SK-N-SH (cell line): ENCODE measurements at regions of chr20 and their contacts with region 1.

Region 1: GRCh38 chr20:37192137-37192854 is 12.9 kb upstream of the MROH8 start:
- DNase-seq: peak; percentile 78
- H3K4me3 ChIP-seq: no peak overlapping the region
- H3K27ac ChIP-seq: no peak overlapping the region
- H3K4me1 ChIP-seq: peaks cover 4 to 5% of the 10 kb centered on the region in 2 experiments; a peak in 2 of 4 replicates
- H3K27me3 ChIP-seq: no peaks in the 10 kb centered on the region
- CTCF ChIP-seq: peak; percentile 85
- EP300 ChIP-seq: no peak
- RAD21 ChIP-seq: peak; percentile 71

Region 2: GRCh38 chr20:36908603-36909002 is 283.7 kb before region 1 on chr20:
- CTCF ChIA-PET with region 1: no interaction called
- POLR2A ChIA-PET with region 1: no interaction called
- DNase-seq: peak; percentile 47
- H3K4me3 ChIP-seq: no peak overlapping the region
- H3K27ac ChIP-seq: no peak overlapping the region
- H3K4me1 ChIP-seq: peaks cover 0 to 2% of the 10 kb centered on the region in 2 experiments; a peak in 1 of 4 replicates
- H3K27me3 ChIP-seq: no peaks in the 10 kb centered on the region
- CTCF ChIP-seq: no peak
- EP300 ChIP-seq: no peak
- RAD21 ChIP-seq: no peak

Region 3: DNA sequence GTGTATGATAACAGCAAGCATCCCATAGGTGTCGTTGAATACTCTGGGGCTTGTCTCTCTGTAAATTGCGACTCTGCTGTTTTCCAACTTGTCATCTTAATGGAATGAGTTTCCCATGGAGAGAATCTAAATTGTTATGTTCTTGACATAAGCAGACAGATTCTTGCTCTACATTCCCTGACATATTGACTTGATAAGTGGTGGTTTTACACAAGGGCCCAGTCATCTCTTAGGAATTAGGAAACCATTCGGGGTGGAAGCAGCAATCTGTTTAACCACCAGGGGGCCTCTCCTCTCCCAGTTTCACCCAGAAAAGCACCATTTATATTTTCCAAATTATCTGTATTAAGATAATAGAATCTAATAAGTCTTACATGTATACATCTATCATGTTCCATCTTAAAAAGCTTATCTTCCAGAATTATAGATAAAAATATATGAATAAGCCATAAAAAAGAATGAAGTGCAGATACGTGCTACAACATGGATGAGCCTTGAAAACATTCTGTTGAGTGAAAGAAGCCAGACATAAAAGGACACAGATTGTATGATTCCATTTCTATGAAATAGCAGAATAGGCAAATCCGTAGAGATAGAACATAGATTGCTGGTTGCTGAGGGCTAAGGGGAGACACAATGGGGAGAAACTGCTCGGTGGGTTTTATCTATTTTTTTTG is 10.1 kb after region 1 on chr20:
- CTCF ChIA-PET with region 1: interaction called, 35 read pairs
- POLR2A ChIA-PET with region 1: no interaction called
- DNase-seq: peak; percentile 66
- H3K4me3 ChIP-seq: peak overlapping the region in 1 of 2 experiments; percentile 23; a peak in 2 of 4 replicates
- H3K27ac ChIP-seq: peak overlapping the region; percentile 93 to 96
- H3K4me1 ChIP-seq: peaks cover 13 to 28% of the 10 kb centered on the region in 2 experiments
- H3K27me3 ChIP-seq: no peaks in the 10 kb centered on the region
- CTCF ChIP-seq: peak; percentile 95
- EP300 ChIP-seq: peak; percentile 19 to 72; a peak in 2 of 4 replicates
- RAD21 ChIP-seq: peak; percentile 74

Region 4: GRCh38 chr20:37231947-37232605 is 39.8 kb after region 1 on chr20:
- CTCF ChIA-PET with region 1: interaction called, 19 read pairs
- POLR2A ChIA-PET with region 1: no interaction called
- DNase-seq: peak; percentile 57
- H3K4me3 ChIP-seq: no peak overlapping the region
- H3K27ac ChIP-seq: peak overlapping the region; percentile 20 to 99; a peak in 3 of 4 replicates
- H3K4me1 ChIP-seq: peaks cover 0 to 58% of the 10 kb centered on the region in 2 experiments; a peak in 2 of 4 replicates
- H3K27me3 ChIP-seq: no peaks in the 10 kb centered on the region
- CTCF ChIP-seq: no peak
- EP300 ChIP-seq: peak in 1 of 2 experiments; percentile 75; a peak in 2 of 4 replicates
- RAD21 ChIP-seq: peak; percentile 20; the same call in 1 of the 2 replicates

Region 5: GRCh38 chr20:37349517-37350491 is 157.5 kb after region 1 on chr20:
- CTCF ChIA-PET with region 1: interaction called, 12 read pairs
- POLR2A ChIA-PET with region 1: no interaction called
- DNase-seq: peak; percentile 13
- H3K4me3 ChIP-seq: no peak overlapping the region
- H3K27ac ChIP-seq: peak overlapping the region in 1 of 2 experiments; percentile 50; a peak in 1 of 4 replicates
- H3K4me1 ChIP-seq: peaks cover 4 to 71% of the 10 kb centered on the region in 2 experiments; a peak in 3 of 4 replicates
- H3K27me3 ChIP-seq: no peaks in the 10 kb centered on the region
- CTCF ChIP-seq: no peak
- EP300 ChIP-seq: no peak
- RAD21 ChIP-seq: no peak

Region 6: GRCh38 chr20:37392421-37393178 is 200.3 kb after region 1 on chr20:
- CTCF ChIA-PET with region 1: interaction called, 18 read pairs
- POLR2A ChIA-PET with region 1: no interaction called
- DNase-seq: peak; percentile 71
- H3K4me3 ChIP-seq: no peak overlapping the region
- H3K27ac ChIP-seq: peak overlapping the region in 1 of 2 experiments; percentile 88; a peak in 2 of 4 replicates
- H3K4me1 ChIP-seq: peaks cover 0 to 53% of the 10 kb centered on the region in 2 experiments; a peak in 2 of 4 replicates
- H3K27me3 ChIP-seq: no peaks in the 10 kb centered on the region
- CTCF ChIP-seq: peak; percentile 47; the same call in 1 of the 2 replicates
- EP300 ChIP-seq: no peak
- RAD21 ChIP-seq: peak; percentile 50

Region 7: DNA sequence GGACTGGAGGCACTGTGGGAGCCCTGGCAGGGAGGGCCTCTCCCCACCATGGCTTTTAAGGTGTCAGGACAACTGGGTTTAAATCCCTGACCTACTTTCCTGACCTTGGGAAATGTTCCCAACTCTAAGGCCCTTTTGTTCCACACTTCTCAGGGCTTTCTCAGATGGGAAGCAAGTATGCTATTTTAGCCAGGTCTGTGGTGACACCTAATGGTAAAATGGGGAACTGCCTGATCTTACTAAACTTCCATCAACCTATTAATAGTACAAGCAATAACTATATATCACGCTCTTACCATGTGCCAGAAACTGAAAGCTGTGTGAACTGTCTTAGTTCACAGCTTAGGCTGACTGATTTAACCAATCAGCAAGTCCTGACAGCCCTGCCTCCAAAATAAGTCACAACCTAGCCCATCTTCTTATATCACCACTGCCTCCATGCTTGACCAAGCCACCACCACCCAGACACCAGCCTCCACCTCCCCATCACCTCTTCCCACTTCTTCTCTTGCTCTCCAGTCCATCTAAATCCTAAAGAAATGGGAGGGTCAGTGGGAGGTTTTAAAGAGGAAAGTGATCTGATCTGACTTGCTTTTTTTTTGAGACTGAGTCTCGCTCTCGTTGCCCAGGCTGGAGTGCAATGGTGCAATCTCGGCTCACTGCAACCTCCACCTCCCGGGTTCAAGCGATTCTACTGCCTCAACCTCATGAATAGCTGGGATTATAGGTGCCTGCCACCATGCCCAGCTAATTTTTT is 342.3 kb after region 1 on chr20:
- CTCF ChIA-PET with region 1: interaction called, 280 read pairs
- POLR2A ChIA-PET with region 1: no interaction called
- DNase-seq: peak; percentile 61
- H3K4me3 ChIP-seq: no peak overlapping the region
- H3K27ac ChIP-seq: no peak overlapping the region; a peak in 1 of 4 replicates
- H3K4me1 ChIP-seq: peaks cover 0 to 4% of the 10 kb centered on the region in 2 experiments; a peak in 1 of 4 replicates
- H3K27me3 ChIP-seq: no peaks in the 10 kb centered on the region
- CTCF ChIP-seq: peak; percentile 90
- EP300 ChIP-seq: no peak
- RAD21 ChIP-seq: peak; percentile 99